Activated CD4-positive, alpha-beta T cell treated with anti-CD3 and anti-CD28 coated beads, Interleukin-2, amount 10 ng/mL, durations not matched to agents 24 days and 14 days (primary cell): ENCODE measurements at regions of chr13 and their contacts with region 1.

Region 1: GRCh38 chr13:77480066-77480465 is 55.4 kb upstream of the SCEL start:
- DNase-seq: no peak
- H3K4me3 Mint-ChIP-seq: no peak overlapping the region
- H3K27ac Mint-ChIP-seq: no peak overlapping the region
- H3K4me1 Mint-ChIP-seq: peaks cover 15% of the 10 kb centered on the region
- H3K27me3 Mint-ChIP-seq: peaks cover 5% of the 10 kb centered on the region

Region 2: DNA sequence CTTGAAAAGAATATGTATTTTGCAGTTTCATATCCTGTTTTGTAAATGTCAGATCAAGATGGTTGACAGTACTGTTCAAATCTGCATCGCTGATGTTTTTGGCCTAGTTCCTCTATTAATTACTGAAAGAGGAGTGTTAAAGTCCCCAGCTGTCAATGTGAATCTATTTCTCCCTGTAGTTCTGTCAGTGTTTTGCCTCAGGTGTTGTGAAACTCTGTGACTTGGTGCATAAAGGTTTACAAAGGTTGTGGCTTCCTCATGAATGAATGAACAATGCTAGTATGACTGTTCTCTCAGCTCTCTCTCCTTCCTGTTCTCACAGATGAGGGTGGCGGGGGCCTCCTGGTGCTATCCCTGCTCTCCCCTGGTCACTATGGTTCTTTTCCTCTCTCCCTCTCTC is 295.6 kb before region 1 on chr13:
- intact Hi-C with region 1: loop called (anchors 5 kb)
- DNase-seq: peak; percentile 70
- H3K4me3 Mint-ChIP-seq: peak overlapping the region; percentile 21
- H3K27ac Mint-ChIP-seq: peak overlapping the region; percentile 76
- H3K4me1 Mint-ChIP-seq: peaks cover 15% of the 10 kb centered on the region
- H3K27me3 Mint-ChIP-seq: no peaks in the 10 kb centered on the region

Region 3: GRCh38 chr13:77291774-77292173 is 188.3 kb before region 1 on chr13:
- intact Hi-C with region 1: loop called (anchors 5 kb)
- DNase-seq: no peak
- H3K4me3 Mint-ChIP-seq: no peak overlapping the region
- H3K27ac Mint-ChIP-seq: peak overlapping the region; percentile 26
- H3K4me1 Mint-ChIP-seq: peaks cover 32% of the 10 kb centered on the region
- H3K27me3 Mint-ChIP-seq: no peaks in the 10 kb centered on the region

Region 4: DNA sequence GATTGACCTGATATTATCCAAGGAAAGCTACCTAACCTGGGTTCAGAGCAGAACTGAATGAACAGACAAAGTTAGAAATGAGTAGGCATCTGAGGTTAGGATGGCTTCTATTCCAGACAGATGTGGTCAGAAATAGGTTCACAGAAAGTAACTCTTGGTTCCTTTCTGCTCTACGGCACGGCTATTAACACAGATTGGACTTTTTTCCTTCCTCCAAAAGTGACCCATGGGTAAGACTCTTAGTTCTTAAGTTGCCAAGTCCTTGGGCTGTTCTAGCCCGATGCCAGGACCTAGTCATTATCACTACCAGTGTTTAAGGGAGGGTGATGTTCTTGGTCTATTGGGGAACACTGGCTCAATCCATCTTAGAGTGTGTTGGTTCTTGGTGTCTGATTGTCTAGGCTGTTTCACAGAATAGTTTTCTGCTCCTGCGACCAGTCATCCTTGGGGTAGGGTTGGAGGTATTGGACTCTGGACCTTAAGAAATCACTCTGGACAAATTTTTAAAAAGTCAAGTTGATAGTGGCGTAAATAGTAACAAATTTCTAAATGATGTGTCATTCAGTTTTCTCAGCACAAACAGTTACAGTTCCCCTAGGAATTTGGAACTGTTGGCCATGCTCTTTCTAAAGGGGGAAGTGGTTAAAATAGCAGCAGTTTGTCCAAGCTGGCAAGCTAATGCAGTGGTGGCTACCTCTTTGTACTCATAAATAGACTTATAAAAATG is 93.0 kb before region 1 on chr13:
- intact Hi-C with region 1: loop called (anchors 5 kb)
- DNase-seq: no peak
- H3K4me3 Mint-ChIP-seq: no peak overlapping the region
- H3K27ac Mint-ChIP-seq: no peak overlapping the region
- H3K4me1 Mint-ChIP-seq: peaks cover 5% of the 10 kb centered on the region
- H3K27me3 Mint-ChIP-seq: peaks cover 43% of the 10 kb centered on the region

Region 5: GRCh38 chr13:77595166-77595810 is 115.2 kb after region 1 on chr13:
- intact Hi-C with region 1: no loop called
- DNase-seq: no peak
- H3K4me3 Mint-ChIP-seq: no peak overlapping the region
- H3K27ac Mint-ChIP-seq: no peak overlapping the region
- H3K4me1 Mint-ChIP-seq: no peaks in the 10 kb centered on the region
- H3K27me3 Mint-ChIP-seq: peaks cover 24% of the 10 kb centered on the region